CD8-positive, alpha-beta memory T cell (primary cell): ENCODE measurements at regions of chr16 and their contacts with region 1.

Region 1: GRCh38 chr16:68085259-68086071 is at the start of gene NFATC3:
- DNase-seq: peak; percentile 97 to 99 (median 99)
- H3K4me3 ChIP-seq: peak within 1 kb of the TSS; percentile 96
- H3K4me3 Mint-ChIP-seq: peak within 1 kb of the TSS; percentile 85 to 93 (median 89)
- H3K27ac ChIP-seq: peak within 1 kb of the TSS; percentile 79
- H3K27ac Mint-ChIP-seq: peak within 1 kb of the TSS; percentile 86 to 98 (median 94)
- H3K4me1 ChIP-seq: peaks cover 74% of the 10 kb centered on the region
- H3K4me1 Mint-ChIP-seq: peaks cover 68 to 77% (median 74%) of the 10 kb centered on the region in 3 donors
- H3K27me3 ChIP-seq: no peaks in the 10 kb centered on the region
- H3K27me3 Mint-ChIP-seq: no peaks in the 10 kb centered on the region
- total RNA-seq, gene NFATC3: 91.1 to 95.9 TPM

Region 2: DNA sequence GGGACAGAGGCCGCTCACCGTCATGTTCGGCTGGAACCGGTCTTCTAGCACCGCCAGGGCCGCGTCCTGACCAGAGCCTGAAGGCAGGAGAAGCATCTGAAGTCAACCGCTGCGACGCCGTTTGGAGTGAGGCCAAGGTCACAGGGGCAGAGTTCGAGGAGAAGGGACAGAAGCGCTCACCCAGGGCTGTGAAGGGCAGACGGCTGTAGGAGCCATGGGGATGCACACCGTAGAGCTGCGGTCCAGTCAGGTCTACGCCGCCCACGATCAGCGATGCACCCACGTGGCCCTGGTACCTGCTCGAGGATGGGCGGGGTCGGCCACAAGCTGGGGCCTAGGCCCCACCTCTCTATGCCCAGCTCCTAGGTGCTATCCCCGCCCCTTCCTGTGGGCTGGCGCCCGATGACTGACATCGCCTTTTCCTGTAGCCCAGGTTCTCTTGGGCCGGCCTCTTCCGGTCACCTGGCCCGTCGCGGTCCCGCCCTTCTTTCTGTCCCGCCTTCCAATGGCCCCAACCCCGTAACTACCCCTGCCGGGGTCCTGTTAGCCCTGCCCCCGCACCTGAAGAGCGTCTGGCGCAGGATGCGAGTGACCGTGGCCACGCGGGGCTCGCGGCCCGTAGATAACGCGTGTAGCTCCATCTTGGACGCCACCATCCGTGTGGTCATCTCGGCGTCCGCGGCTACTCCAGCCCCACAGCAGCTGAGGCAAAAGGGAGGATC is 149.9 kb before region 1 on chr16:
- CTCF ChIA-PET with region 1: interaction called, 4 read pairs
- POLR2A ChIA-PET with region 1: interaction called, 18 read pairs
- DNase-seq: peak; percentile 90 to 97 (median 95)
- H3K4me3 ChIP-seq: peak overlapping the region; percentile 97
- H3K4me3 Mint-ChIP-seq: peak overlapping the region; percentile 100
- H3K27ac ChIP-seq: peak overlapping the region; percentile 87
- H3K27ac Mint-ChIP-seq: peak overlapping the region; percentile 96 to 99 (median 98)
- H3K4me1 ChIP-seq: peaks cover 39% of the 10 kb centered on the region
- H3K4me1 Mint-ChIP-seq: peaks cover 34 to 54% (median 34%) of the 10 kb centered on the region in 3 donors
- H3K27me3 ChIP-seq: no peaks in the 10 kb centered on the region
- H3K27me3 Mint-ChIP-seq: peaks cover 0 to 3% of the 10 kb centered on the region in 2 donors

Region 3: GRCh38 chr16:67951485-67951884 is 134.0 kb before region 1 on chr16:
- CTCF ChIA-PET with region 1: no interaction called
- POLR2A ChIA-PET with region 1: no interaction called
- DNase-seq: no peak
- H3K4me3 ChIP-seq: no peak overlapping the region
- H3K4me3 Mint-ChIP-seq: no peak overlapping the region
- H3K27ac ChIP-seq: no peak overlapping the region
- H3K27ac Mint-ChIP-seq: no peak overlapping the region
- H3K4me1 ChIP-seq: no peaks in the 10 kb centered on the region
- H3K4me1 Mint-ChIP-seq: no peaks in the 10 kb centered on the region
- H3K27me3 ChIP-seq: no peaks in the 10 kb centered on the region
- H3K27me3 Mint-ChIP-seq: no peaks in the 10 kb centered on the region

Region 4: GRCh38 chr16:68064791-68065365 is 20.6 kb before region 1 on chr16:
- CTCF ChIA-PET with region 1: interaction called, 111 read pairs
- POLR2A ChIA-PET with region 1: interaction called, 18 read pairs
- DNase-seq: peak; percentile 56 to 78 (median 62)
- H3K4me3 ChIP-seq: no peak overlapping the region
- H3K4me3 Mint-ChIP-seq: peak overlapping the region; percentile 1 to 88 (median 63)
- H3K27ac ChIP-seq: peak overlapping the region; percentile 12
- H3K27ac Mint-ChIP-seq: peak overlapping the region; percentile 70 to 93 (median 88)
- H3K4me1 ChIP-seq: peaks cover 82% of the 10 kb centered on the region
- H3K4me1 Mint-ChIP-seq: peaks cover 74 to 89% (median 87%) of the 10 kb centered on the region in 3 donors
- H3K27me3 ChIP-seq: no peaks in the 10 kb centered on the region
- H3K27me3 Mint-ChIP-seq: no peaks in the 10 kb centered on the region

Region 5: GRCh38 chr16:68074850-68075555 is 10.5 kb before region 1 on chr16:
- CTCF ChIA-PET with region 1: interaction called, 111 read pairs
- POLR2A ChIA-PET with region 1: interaction called, 31 read pairs
- DNase-seq: peak; percentile 53 to 87 (median 69)
- H3K4me3 ChIP-seq: peak overlapping the region; percentile 40
- H3K4me3 Mint-ChIP-seq: peak overlapping the region; percentile 51 to 91 (median 82)
- H3K27ac ChIP-seq: no peak overlapping the region
- H3K27ac Mint-ChIP-seq: peak overlapping the region; percentile 81 to 99 (median 94)
- H3K4me1 ChIP-seq: peaks cover 85% of the 10 kb centered on the region
- H3K4me1 Mint-ChIP-seq: peaks cover 88 to 90% (median 90%) of the 10 kb centered on the region in 3 donors
- H3K27me3 ChIP-seq: no peaks in the 10 kb centered on the region
- H3K27me3 Mint-ChIP-seq: no peaks in the 10 kb centered on the region